Tibial artery (tissue), 4 donors: ENCODE measurements at regions of chr4 and their contacts with region 1.

Region 1: DNA sequence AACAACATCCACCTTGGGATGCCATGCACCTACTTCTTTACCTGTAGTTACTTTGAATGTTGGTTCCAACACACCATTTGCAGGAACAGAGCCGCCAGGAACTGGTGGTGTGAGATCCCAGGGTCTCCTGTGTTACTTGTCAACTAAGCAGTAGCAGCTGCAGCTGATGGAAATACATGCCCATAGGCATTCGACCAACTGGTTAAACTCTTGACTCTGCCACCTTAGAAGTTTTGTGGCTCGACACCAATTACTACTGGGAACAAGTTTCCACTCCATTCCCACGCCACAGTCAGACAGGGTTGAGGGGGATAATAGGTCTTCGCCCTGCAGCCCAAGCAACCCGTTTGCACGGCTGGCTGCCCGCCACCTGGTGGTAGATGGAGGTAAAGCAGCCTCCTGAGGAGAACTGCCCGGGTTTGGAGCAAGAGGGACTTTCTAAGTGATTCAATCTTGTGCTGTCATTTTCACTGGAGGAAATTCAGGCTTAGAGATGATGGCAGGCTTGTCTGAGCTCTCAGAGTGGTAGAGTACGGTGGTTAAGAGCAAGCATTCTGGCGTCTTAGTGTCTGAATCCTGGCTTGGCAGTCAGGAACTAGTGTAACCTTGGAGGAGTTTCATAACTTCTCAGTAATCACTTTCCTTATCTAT is 119.1 kb upstream of the TRIM2 start:
- DNase-seq: peak; percentile 64 to 77
- H3K4me3 ChIP-seq: no peak overlapping the region
- H3K27ac ChIP-seq: no peak overlapping the region
- H3K4me1 ChIP-seq: peaks cover 0 to 27% (median 13%) of the 10 kb centered on the region in 4 donors
- H3K27me3 ChIP-seq: no peaks in the 10 kb centered on the region
- CTCF ChIP-seq: peak; percentile 84 to 92

Region 2: GRCh38 chr4:152850377-152850776 is 234.7 kb before region 1 on chr4:
- intact Hi-C with region 1: loop called (anchors 5 kb)
- DNase-seq: no peak
- H3K4me3 ChIP-seq: no peak overlapping the region
- H3K27ac ChIP-seq: no peak overlapping the region
- H3K4me1 ChIP-seq: peaks cover 0 to 7% (median 4%) of the 10 kb centered on the region in 4 donors
- H3K27me3 ChIP-seq: no peaks in the 10 kb centered on the region
- CTCF ChIP-seq: no peak

Region 3: DNA sequence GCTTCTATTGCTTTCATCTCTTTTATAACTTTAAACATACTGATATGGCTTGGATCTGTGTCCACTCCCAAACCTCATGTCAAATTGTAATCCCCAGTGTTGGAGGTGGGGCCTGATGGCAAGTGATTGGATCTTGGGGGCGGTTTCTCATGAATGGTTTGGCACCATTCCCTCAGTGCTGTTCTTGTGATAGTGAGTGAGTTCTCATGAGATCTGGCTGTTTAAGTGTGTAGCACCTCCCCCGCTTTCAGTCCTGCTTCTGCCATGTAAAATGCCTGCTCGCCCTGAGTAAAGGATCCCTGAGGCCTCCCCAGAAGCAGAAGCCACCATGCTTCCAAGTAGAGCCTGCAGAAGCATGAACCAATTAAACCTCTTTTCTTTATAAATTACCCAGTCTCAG is 277.1 kb after region 1 on chr4:
- intact Hi-C with region 1: no loop called
- DNase-seq: no peak
- H3K4me3 ChIP-seq: no peak overlapping the region
- H3K27ac ChIP-seq: no peak overlapping the region
- H3K4me1 ChIP-seq: no peaks in the 10 kb centered on the region
- H3K27me3 ChIP-seq: no peaks in the 10 kb centered on the region
- CTCF ChIP-seq: no peak